IMR-90 (cell line): ENCODE measurements at regions of chr12 and their contacts with region 1.

Region 1: DNA sequence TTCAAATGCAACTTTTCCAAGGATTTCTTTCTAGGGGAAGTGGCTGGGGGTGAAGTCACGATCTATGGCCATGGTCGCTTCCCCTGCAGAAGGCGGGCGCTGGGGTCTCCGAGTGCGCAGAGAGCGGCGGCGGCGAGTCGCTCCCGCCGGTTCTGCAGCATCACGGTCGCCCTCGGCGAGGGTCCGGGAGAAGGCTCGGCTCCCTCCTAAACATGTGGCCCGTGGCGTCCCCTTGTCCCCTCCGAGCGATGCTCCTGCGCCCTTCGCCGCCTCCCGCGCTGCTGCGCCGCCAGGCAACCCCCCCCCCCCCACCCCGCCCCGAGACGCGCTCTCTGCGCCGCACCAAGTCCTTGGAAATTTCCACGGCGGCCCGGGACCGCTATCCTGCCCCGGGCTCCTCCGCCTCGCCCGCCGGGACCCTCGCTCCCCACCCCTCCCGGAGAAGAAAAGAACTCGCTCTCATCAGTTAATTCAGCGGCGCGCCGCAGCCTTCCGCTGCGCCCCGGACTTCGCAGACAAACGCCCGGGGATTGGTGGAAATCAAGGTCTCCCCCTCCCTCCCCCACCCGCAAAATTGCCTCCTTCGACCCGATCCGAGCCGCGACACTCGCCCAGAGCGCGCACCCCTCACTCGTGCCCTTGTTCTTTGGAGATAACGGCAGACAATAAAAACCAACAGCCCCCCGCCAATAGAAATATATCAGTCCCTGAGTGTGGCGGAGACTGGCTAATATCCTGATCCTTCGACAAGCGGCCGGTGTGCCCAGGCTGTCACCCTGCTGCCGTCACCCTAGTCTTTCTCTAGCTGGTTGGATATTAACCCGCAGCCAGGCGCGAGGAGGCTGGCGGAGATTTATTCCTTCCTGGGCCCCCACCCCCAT is at the start of gene ST8SIA1:
- DNase-seq: no peak
- ATAC-seq: peak; percentile 38
- H3K4me3 ChIP-seq: peak within 1 kb of the TSS; percentile 49
- H3K27ac ChIP-seq: no peak within 1 kb of the TSS
- H3K4me1 ChIP-seq: peaks cover 2% of the 10 kb centered on the region; the same call in 1 of the 2 replicates
- H3K27me3 ChIP-seq: peaks cover 33% of the 10 kb centered on the region
- CTCF ChIP-seq: no peak
- POLR2A ChIP-seq: no peak
- RAD21 ChIP-seq: no peak
- total RNA-seq, gene ST8SIA1: 0.28 TPM in 1 of 2 replicates, not detected in the other

Region 2: GRCh38 chr12:21697904-21698630 is 636.6 kb before region 1 on chr12:
- CTCF ChIA-PET with region 1: no interaction called
- POLR2A ChIA-PET with region 1: no interaction called
- dilution Hi-C with region 1: no loop called
- in situ Hi-C with region 1: no loop called
- intact Hi-C with region 1: loop called (anchors 1 kb)
- DNase-seq: peak; percentile 48
- ATAC-seq: no peak
- H3K4me3 ChIP-seq: no peak overlapping the region
- H3K27ac ChIP-seq: no peak overlapping the region
- H3K4me1 ChIP-seq: 0 out of 2 replicates have a peak, but pooled peaks cover 2% of the 10 kb centered on the region
- H3K27me3 ChIP-seq: no peaks in the 10 kb centered on the region
- CTCF ChIP-seq: peak; percentile 81
- POLR2A ChIP-seq: no peak
- RAD21 ChIP-seq: peak; percentile 74

Region 3: DNA sequence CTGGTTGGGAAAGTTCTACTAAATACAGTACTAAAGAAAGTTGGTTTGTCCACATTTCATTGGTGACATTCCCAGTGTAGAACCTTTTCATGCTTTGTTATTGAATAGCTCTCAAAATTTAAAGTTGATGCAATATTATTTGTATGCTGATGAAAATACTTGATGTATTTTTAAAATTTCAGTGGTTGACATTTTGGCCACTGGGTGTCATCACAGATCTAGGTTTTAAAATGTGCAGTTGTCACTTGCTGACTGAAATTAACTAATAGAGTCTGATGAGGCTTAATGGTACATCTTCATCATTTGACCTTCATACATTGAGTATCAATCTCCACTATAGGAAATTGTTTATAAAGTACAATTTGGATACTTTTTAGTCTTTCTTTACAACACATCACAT is 251.5 kb before region 1 on chr12:
- CTCF ChIA-PET with region 1: interaction called, 15 read pairs
- POLR2A ChIA-PET with region 1: no interaction called
- dilution Hi-C with region 1: no loop called
- in situ Hi-C with region 1: loop called (anchors 5 kb)
- intact Hi-C with region 1: loop called (anchors 1 kb)
- DNase-seq: peak; percentile 35
- ATAC-seq: peak; percentile 70
- H3K4me3 ChIP-seq: no peak overlapping the region
- H3K27ac ChIP-seq: no peak overlapping the region
- H3K4me1 ChIP-seq: no peaks in the 10 kb centered on the region
- H3K27me3 ChIP-seq: no peaks in the 10 kb centered on the region; the same call in 1 of the 2 replicates
- CTCF ChIP-seq: peak; percentile 64
- POLR2A ChIP-seq: no peak
- RAD21 ChIP-seq: peak; percentile 74

Region 4: DNA sequence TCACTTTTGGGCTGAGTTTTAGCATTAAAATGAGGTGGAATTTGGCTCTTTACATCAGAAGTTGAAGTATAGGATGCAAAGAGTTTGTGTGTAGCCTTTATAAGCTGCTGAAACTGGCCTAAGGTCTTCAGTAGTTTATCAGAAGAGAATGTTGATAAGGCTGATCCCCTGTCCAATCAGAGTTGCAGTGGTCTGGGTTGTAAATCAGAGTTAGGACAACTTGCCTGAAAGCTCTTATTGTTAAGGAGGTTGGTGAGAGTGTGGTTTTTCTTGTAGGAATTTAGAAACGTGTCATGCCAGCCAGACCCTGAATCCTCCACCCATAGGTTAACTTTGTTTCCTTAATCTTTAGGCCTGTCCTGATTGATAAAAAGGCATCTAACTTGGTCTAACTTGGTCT is 143.7 kb before region 1 on chr12:
- CTCF ChIA-PET with region 1: interaction called, 3 read pairs
- POLR2A ChIA-PET with region 1: no interaction called
- dilution Hi-C with region 1: no loop called
- in situ Hi-C with region 1: no loop called
- intact Hi-C with region 1: loop called (anchors 1 kb)
- DNase-seq: no peak
- ATAC-seq: no peak
- H3K4me3 ChIP-seq: no peak overlapping the region
- H3K27ac ChIP-seq: no peak overlapping the region
- H3K4me1 ChIP-seq: no peaks in the 10 kb centered on the region
- H3K27me3 ChIP-seq: peaks cover 2% of the 10 kb centered on the region; the same call in 1 of the 2 replicates
- CTCF ChIP-seq: no peak
- POLR2A ChIP-seq: no peak
- RAD21 ChIP-seq: no peak

Region 5: GRCh38 chr12:22275846-22276245 is 58.8 kb before region 1 on chr12:
- CTCF ChIA-PET with region 1: interaction called, 5 read pairs
- POLR2A ChIA-PET with region 1: no interaction called
- dilution Hi-C with region 1: no loop called
- in situ Hi-C with region 1: no loop called
- intact Hi-C with region 1: loop called (anchors 2 kb)
- DNase-seq: peak; percentile 99
- ATAC-seq: peak; percentile 99
- H3K4me3 ChIP-seq: no peak overlapping the region
- H3K27ac ChIP-seq: peak overlapping the region; percentile 92
- H3K4me1 ChIP-seq: peaks cover 10% of the 10 kb centered on the region
- H3K27me3 ChIP-seq: no peaks in the 10 kb centered on the region
- CTCF ChIP-seq: no peak
- POLR2A ChIP-seq: no peak
- RAD21 ChIP-seq: peak; percentile 21; the same call in 1 of the 2 replicates

Region 6: GRCh38 chr12:22396253-22396652 is 61.6 kb after region 1 on chr12:
- CTCF ChIA-PET with region 1: no interaction called
- POLR2A ChIA-PET with region 1: no interaction called
- dilution Hi-C with region 1: no loop called
- in situ Hi-C with region 1: no loop called
- intact Hi-C with region 1: no loop called
- DNase-seq: no peak
- ATAC-seq: no peak
- H3K4me3 ChIP-seq: no peak overlapping the region
- H3K27ac ChIP-seq: no peak overlapping the region
- H3K4me1 ChIP-seq: no peaks in the 10 kb centered on the region
- H3K27me3 ChIP-seq: no peaks in the 10 kb centered on the region
- CTCF ChIP-seq: no peak
- POLR2A ChIP-seq: no peak
- RAD21 ChIP-seq: no peak

Region 7: GRCh38 chr12:22443379-22444316 is 109.0 kb after region 1 on chr12:
- CTCF ChIA-PET with region 1: interaction called, 3 read pairs
- POLR2A ChIA-PET with region 1: no interaction called
- dilution Hi-C with region 1: no loop called
- in situ Hi-C with region 1: loop called (anchors 5 kb)
- intact Hi-C with region 1: loop called (anchors 1 kb)
- DNase-seq: peak; percentile 79
- ATAC-seq: peak; percentile 99
- H3K4me3 ChIP-seq: no peak overlapping the region
- H3K27ac ChIP-seq: no peak overlapping the region
- H3K4me1 ChIP-seq: peaks cover 3% of the 10 kb centered on the region; the same call in 1 of the 2 replicates
- H3K27me3 ChIP-seq: no peaks in the 10 kb centered on the region; the same call in 1 of the 2 replicates
- CTCF ChIP-seq: peak; percentile 81
- POLR2A ChIP-seq: no peak
- RAD21 ChIP-seq: peak; percentile 88

Region 8: GRCh38 chr12:22459838-22460490 is 125.3 kb after region 1 on chr12:
- CTCF ChIA-PET with region 1: no interaction called
- POLR2A ChIA-PET with region 1: no interaction called
- dilution Hi-C with region 1: no loop called
- in situ Hi-C with region 1: no loop called
- intact Hi-C with region 1: no loop called
- DNase-seq: peak; percentile 54
- ATAC-seq: peak; percentile 79
- H3K4me3 ChIP-seq: no peak overlapping the region
- H3K27ac ChIP-seq: no peak overlapping the region
- H3K4me1 ChIP-seq: no peaks in the 10 kb centered on the region
- H3K27me3 ChIP-seq: no peaks in the 10 kb centered on the region
- CTCF ChIP-seq: peak; percentile 60
- POLR2A ChIP-seq: no peak
- RAD21 ChIP-seq: peak; percentile 38